ENCODE measurements at regions of chr4 and their contacts with region 1.

Region 1: DNA sequence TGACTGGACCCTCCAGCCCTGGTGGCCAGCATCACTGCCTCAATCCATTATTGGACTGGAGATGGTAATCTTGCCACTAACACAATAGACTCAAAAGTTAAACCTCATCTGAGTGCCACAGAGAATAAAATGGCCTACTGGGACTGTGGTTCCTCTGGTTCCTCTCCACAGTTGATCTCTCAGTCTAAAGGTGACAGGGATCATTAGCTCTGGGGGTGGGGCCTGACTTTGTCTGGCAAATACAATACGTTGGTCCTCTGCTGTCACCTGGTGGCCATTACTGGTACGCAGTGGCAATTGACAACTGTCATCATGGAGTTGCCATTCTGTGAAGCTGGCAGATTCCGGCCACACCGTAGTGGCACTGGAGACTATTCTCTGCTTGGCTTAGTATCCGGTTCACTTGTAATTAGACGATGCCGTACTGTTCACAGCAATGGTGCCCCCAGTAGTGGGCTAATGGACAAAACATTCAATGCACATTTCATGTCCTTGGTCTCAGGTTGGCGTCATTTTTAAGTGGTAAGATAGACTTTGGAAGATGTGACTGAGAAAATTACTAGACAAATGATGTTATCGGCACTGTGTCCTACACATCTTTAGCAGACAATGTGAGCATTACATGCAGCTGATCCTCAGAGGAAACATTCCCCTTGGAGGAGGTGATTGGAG is 6.7 kb downstream of the FGFBP2 start:
- DNase-seq: peak; percentile 69
- H3K27ac ChIP-seq: peak overlapping the region; percentile 8; the same call in 1 of the 2 replicates
- CTCF ChIP-seq: peak; percentile 96

Region 2: GRCh38 chr4:15882675-15883086 is 73.6 kb before region 1 on chr4:
- CTCF ChIA-PET with region 1: interaction called, 36 read pairs
- POLR2A ChIA-PET with region 1: no interaction called
- DNase-seq: peak; percentile 34
- H3K27ac ChIP-seq: no peak overlapping the region
- CTCF ChIP-seq: peak; percentile 88

Region 3: GRCh38 chr4:15976456-15977447 is 20.4 kb after region 1 on chr4:
- CTCF ChIA-PET with region 1: no interaction called
- POLR2A ChIA-PET with region 1: no interaction called
- DNase-seq: no peak
- H3K27ac ChIP-seq: no peak overlapping the region
- CTCF ChIP-seq: no peak

Measured in RWPE1 (cell line).